Mammary epithelial cell (primary cell): ENCODE measurements at regions of chr11 and their contacts with region 1.

Region 1: DNA sequence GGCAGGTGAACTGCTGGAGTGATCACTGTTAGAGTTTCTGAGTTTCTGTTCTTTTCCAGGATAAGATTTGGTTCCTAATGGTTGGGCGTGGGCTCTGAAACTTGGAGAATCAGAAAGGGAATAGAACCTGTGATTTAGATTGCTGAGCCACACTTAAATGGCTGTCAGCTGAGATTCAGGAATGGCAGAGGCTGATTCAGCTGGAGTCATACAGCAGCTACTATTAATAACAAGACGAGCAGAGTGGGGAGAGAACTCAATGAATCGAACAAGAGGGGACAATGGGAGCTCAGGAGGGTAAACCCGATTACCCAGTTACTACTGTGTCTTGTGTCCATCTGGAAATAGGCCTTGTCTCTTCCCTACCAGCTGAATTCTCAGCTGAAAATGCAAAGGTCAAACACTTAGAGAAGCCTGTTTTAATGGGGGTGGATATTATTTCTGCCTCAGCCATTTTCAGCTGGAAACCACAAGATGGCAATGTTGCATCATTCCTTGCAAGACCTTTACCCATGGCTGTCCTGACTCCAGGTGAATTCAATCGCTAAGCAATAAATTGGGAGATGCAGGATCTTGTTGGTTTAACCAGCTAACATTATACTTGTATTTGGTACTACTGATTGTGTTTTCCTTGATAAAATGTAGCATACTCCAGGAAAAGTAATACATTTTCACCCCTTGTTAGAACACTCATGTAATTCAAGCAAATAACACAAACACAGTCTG is 104.5 kb upstream of the RAG2 start:
- DNase-seq: peak; percentile 61
- H3K4me3 ChIP-seq: no peak overlapping the region
- H3K27ac ChIP-seq: no peak overlapping the region
- H3K4me1 ChIP-seq: peaks cover 6% of the 10 kb centered on the region
- H3K27me3 ChIP-seq: no peaks in the 10 kb centered on the region
- CTCF ChIP-seq: peak; percentile 86 to 89

Region 2: DNA sequence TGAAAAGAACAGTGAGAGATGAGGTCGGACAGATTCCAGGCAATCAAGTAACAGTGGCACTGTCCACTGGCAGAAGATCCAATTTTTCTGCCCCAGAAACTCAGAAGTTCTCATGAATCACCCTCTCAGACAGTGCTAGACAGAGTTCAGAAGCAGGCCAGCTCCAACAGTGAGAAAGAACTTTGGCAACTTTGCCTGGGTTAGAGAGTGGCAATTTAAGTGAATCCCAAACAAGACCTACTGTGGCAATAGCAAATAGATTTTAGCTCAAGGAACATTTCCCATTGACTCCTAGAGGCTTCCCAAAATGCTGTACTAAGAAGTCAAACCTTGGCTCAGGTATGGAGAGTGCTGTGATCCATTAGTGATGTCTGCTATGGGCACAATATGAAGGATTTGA is 1551.3 kb before region 1 on chr11:
- CTCF ChIA-PET with region 1: no interaction called
- dilution Hi-C with region 1: no loop called
- in situ Hi-C with region 1: no loop called
- intact Hi-C with region 1: no loop called
- DNase-seq: no peak
- H3K4me3 ChIP-seq: no peak overlapping the region
- H3K27ac ChIP-seq: peak overlapping the region; percentile 19
- H3K4me1 ChIP-seq: peaks cover 52% of the 10 kb centered on the region
- H3K27me3 ChIP-seq: no peaks in the 10 kb centered on the region
- CTCF ChIP-seq: no peak

Region 3: GRCh38 chr11:36631774-36632173 is 70.7 kb before region 1 on chr11:
- CTCF ChIA-PET with region 1: no interaction called
- dilution Hi-C with region 1: no loop called
- in situ Hi-C with region 1: no loop called
- intact Hi-C with region 1: no loop called
- DNase-seq: no peak
- H3K4me3 ChIP-seq: no peak overlapping the region
- H3K27ac ChIP-seq: no peak overlapping the region
- H3K4me1 ChIP-seq: no peaks in the 10 kb centered on the region
- H3K27me3 ChIP-seq: no peaks in the 10 kb centered on the region
- CTCF ChIP-seq: no peak

Region 4: DNA sequence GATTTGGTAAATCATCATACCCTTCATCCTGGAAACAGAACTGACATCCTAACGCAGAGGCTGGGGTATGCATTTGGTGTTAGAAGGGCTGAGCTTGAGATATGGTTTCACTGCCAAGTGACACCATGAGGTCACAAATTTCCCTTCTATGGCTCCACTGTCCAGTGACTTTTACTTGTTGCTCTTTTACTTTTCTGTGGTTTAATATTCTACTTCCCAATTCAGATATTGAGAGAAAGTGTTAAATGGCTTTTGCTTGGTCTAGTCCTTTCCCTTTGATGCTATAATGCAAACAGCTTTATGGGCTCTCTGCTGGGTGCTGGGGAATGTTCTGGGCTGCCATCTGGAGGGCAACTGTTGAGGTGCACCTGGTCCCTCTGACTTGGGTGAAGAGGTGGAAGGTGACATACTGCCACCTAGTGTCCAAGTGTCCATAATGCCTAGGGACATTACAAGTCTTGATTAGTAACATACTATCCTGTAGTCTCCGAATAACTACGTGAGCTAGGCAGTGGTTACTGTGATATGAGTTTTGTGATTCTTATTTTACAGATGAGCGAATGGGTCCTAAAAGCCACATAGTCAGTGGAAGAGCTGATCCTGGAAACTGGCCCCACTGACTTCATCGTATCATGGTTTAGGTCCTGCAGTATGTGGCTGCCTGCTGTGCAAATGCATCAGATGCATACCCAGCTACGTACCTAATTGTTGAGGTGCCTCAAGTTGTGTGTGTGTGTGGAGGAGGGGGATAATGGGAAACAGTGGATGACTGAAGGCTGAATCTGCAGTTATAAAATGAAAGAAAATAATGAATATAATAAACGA is 44.6 kb after region 1 on chr11:
- CTCF ChIA-PET with region 1: interaction called, 16 read pairs
- dilution Hi-C with region 1: no loop called
- in situ Hi-C with region 1: no loop called
- intact Hi-C with region 1: loop called (anchors 1 kb)
- DNase-seq: peak; percentile 78
- H3K4me3 ChIP-seq: no peak overlapping the region
- H3K27ac ChIP-seq: no peak overlapping the region
- H3K4me1 ChIP-seq: no peaks in the 10 kb centered on the region
- H3K27me3 ChIP-seq: no peaks in the 10 kb centered on the region
- CTCF ChIP-seq: peak; percentile 100

Region 5: DNA sequence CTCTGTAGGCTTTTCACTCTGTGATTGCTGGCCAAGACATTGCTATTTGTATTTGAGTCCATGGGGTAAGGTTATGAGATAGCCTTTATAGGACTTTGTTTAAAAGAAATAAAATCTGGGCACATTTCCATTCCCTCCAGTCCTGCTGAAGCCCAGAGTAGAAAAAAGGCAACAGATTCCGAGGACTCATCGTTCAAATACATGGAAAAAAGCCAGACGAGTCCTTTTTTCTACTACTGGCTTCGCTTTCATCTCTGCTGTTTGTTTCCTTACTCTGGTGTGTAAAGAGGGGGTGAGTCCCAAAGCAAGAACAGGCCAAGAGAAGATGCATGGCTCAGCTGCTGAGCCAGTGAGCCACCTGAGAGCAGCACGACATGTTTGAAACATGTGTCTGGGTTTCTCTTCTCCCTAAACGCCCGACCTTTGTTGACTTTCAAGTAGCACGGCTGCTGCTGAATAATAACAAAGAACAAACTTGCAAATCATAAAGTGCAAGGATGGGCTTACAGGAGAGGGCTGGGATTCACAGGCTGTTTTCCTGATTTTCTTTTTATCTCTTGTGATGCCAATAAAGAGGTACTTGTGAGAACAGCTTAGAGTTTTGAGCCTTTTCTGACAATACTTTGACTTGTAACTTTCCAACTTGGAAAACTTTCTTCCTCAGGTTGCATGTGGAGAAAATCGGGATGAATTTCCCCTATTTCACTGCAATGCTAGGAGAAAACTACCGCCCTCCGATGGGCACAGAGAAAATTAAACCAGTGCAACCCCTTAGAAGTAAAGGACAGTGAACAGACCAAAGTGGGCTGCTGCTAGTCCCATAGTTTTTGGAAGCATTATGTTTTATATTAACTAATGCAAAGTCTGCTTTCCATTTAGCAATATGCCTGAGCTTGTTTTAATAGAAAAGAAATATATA is 90.8 kb after region 1 on chr11:
- CTCF ChIA-PET with region 1: no interaction called
- dilution Hi-C with region 1: no loop called
- in situ Hi-C with region 1: no loop called
- intact Hi-C with region 1: loop called (anchors 10 kb)
- DNase-seq: no peak
- H3K4me3 ChIP-seq: peak overlapping the region in 1 of 3 experiments; percentile 7
- H3K27ac ChIP-seq: no peak overlapping the region
- H3K4me1 ChIP-seq: no peaks in the 10 kb centered on the region
- H3K27me3 ChIP-seq: no peaks in the 10 kb centered on the region
- CTCF ChIP-seq: peak in 1 of 2 donors; percentile 43

Region 6: DNA sequence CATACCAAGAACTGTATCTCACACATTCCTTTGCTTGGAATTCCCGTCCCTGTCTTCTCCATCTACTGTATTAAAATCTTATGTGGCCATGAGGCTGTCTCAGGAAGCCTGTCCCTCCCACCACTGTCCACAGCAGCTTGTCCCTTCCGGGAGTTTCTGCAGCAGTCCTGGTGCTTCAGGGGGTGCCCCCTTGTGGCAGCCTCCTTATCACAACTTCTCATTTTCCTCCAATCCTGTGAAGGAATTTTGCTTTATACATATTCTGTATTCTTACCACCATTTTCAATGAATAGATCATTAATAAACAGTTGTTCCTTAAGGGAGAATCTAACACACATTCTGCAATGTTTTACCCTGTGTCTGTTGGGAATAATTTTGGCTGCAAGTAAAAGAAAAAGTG is 115.9 kb after region 1 on chr11:
- CTCF ChIA-PET with region 1: no interaction called
- dilution Hi-C with region 1: no loop called
- in situ Hi-C with region 1: no loop called
- intact Hi-C with region 1: loop called (anchors 1 kb)
- DNase-seq: no peak
- H3K4me3 ChIP-seq: no peak overlapping the region
- H3K27ac ChIP-seq: no peak overlapping the region
- H3K4me1 ChIP-seq: peaks cover 3% of the 10 kb centered on the region
- H3K27me3 ChIP-seq: peaks cover 4% of the 10 kb centered on the region
- CTCF ChIP-seq: peak; percentile 40 to 52

Region 7: GRCh38 chr11:37525336-37525735 is 822.8 kb after region 1 on chr11:
- CTCF ChIA-PET with region 1: no interaction called
- dilution Hi-C with region 1: no loop called
- in situ Hi-C with region 1: no loop called
- intact Hi-C with region 1: loop called (anchors 10 kb)
- DNase-seq: no peak
- H3K4me3 ChIP-seq: no peak overlapping the region
- H3K27ac ChIP-seq: no peak overlapping the region
- H3K4me1 ChIP-seq: no peaks in the 10 kb centered on the region
- H3K27me3 ChIP-seq: no peaks in the 10 kb centered on the region
- CTCF ChIP-seq: peak in 1 of 2 donors; percentile 50

Region 8: DNA sequence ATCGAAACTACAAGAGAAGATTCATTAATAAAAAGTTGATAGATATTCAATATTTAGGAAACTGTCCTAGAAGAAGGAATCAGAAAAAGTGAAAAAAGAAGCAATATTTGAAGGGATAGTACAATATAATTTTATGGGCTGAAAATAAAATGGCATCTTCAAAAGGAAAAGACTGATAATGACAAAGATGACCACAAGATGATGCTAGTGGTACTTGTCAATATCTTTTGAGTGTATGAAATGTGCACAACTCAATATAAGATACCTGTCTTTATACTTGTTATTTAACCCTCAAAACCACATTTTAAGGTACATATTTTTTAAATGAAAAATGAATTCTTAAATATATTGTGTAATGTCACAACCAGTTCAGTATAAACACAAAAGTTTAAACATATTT is 955.2 kb after region 1 on chr11:
- CTCF ChIA-PET with region 1: no interaction called
- dilution Hi-C with region 1: no loop called
- in situ Hi-C with region 1: no loop called
- intact Hi-C with region 1: loop called (anchors 10 kb)
- DNase-seq: peak; percentile 29
- H3K4me3 ChIP-seq: no peak overlapping the region
- H3K27ac ChIP-seq: no peak overlapping the region
- H3K4me1 ChIP-seq: no peaks in the 10 kb centered on the region
- H3K27me3 ChIP-seq: no peaks in the 10 kb centered on the region
- CTCF ChIP-seq: peak; percentile 74 to 82